B cell (primary cell): ENCODE measurements at regions of chr6 and their contacts with region 1.

Region 1: GRCh38 chr6:158808941-158809678 is 10.1 kb downstream of the EZR start:
- DNase-seq: peak; percentile 89
- ATAC-seq: peak; percentile 80
- H3K4me3 ChIP-seq: peak overlapping the region in 3 of 5 experiments; percentile 12 to 50 (median 15)
- H3K4me3 Mint-ChIP-seq: peak overlapping the region; percentile 85
- H3K27ac ChIP-seq: peak overlapping the region; percentile 94 to 96
- H3K27ac Mint-ChIP-seq: peak overlapping the region; percentile 96
- H3K4me1 ChIP-seq: peaks cover 97 to 98% of the 10 kb centered on the region in 2 donors
- H3K4me1 Mint-ChIP-seq: peaks cover 96% of the 10 kb centered on the region
- H3K27me3 ChIP-seq: no peaks in the 10 kb centered on the region
- H3K27me3 Mint-ChIP-seq: no peaks in the 10 kb centered on the region
- CTCF ChIP-seq: no peak

Region 2: GRCh38 chr6:158704181-158704822 is 104.8 kb before region 1 on chr6:
- CTCF ChIA-PET with region 1: interaction called, 13 read pairs
- POLR2A ChIA-PET with region 1: interaction called, 4 read pairs
- intact Hi-C with region 1: no loop called
- DNase-seq: peak; percentile 90
- ATAC-seq: peak; percentile 98
- H3K4me3 ChIP-seq: peak overlapping the region in 4 of 5 experiments; percentile 33 to 59 (median 52)
- H3K4me3 Mint-ChIP-seq: peak overlapping the region; percentile 92
- H3K27ac ChIP-seq: peak overlapping the region in 1 of 2 donors; percentile 36
- H3K27ac Mint-ChIP-seq: peak overlapping the region; percentile 89
- H3K4me1 ChIP-seq: peaks cover 19 to 30% of the 10 kb centered on the region in 2 donors
- H3K4me1 Mint-ChIP-seq: peaks cover 27% of the 10 kb centered on the region
- H3K27me3 ChIP-seq: no peaks in the 10 kb centered on the region
- H3K27me3 Mint-ChIP-seq: no peaks in the 10 kb centered on the region
- CTCF ChIP-seq: peak; percentile 99

Region 3: GRCh38 chr6:158769771-158770432 is 39.2 kb before region 1 on chr6:
- CTCF ChIA-PET with region 1: interaction called, 4 read pairs
- POLR2A ChIA-PET with region 1: no interaction called
- intact Hi-C with region 1: loop called (anchors 5 kb)
- DNase-seq: no peak
- ATAC-seq: no peak
- H3K4me3 ChIP-seq: no peak overlapping the region
- H3K4me3 Mint-ChIP-seq: no peak overlapping the region
- H3K27ac ChIP-seq: no peak overlapping the region
- H3K27ac Mint-ChIP-seq: peak overlapping the region; percentile 76
- H3K4me1 ChIP-seq: no peaks in the 10 kb centered on the region
- H3K4me1 Mint-ChIP-seq: no peaks in the 10 kb centered on the region
- H3K27me3 ChIP-seq: no peaks in the 10 kb centered on the region
- H3K27me3 Mint-ChIP-seq: no peaks in the 10 kb centered on the region
- CTCF ChIP-seq: no peak

Region 4: GRCh38 chr6:158793432-158793831 is 15.7 kb before region 1 on chr6:
- CTCF ChIA-PET with region 1: interaction called, 27 read pairs
- POLR2A ChIA-PET with region 1: interaction called, 5 read pairs
- intact Hi-C with region 1: loop called (anchors 2 kb)
- DNase-seq: peak; percentile 68
- ATAC-seq: peak; percentile 35
- H3K4me3 ChIP-seq: no peak overlapping the region
- H3K4me3 Mint-ChIP-seq: peak overlapping the region; percentile 54
- H3K27ac ChIP-seq: peak overlapping the region; percentile 40 to 54
- H3K27ac Mint-ChIP-seq: peak overlapping the region; percentile 61
- H3K4me1 ChIP-seq: peaks cover 91 to 92% of the 10 kb centered on the region in 2 donors
- H3K4me1 Mint-ChIP-seq: peaks cover 91% of the 10 kb centered on the region
- H3K27me3 ChIP-seq: no peaks in the 10 kb centered on the region
- H3K27me3 Mint-ChIP-seq: no peaks in the 10 kb centered on the region
- CTCF ChIP-seq: peak; percentile 68

Region 5: GRCh38 chr6:158819213-158819909 is 10.3 kb after region 1 on chr6 and contains the start of gene EZR:
- CTCF ChIA-PET with region 1: interaction called, 4 read pairs
- POLR2A ChIA-PET with region 1: interaction called, 17 read pairs
- intact Hi-C with region 1: loop called (anchors 1 kb)
- DNase-seq: peak; percentile 94
- ATAC-seq: peak; percentile 69
- H3K4me3 ChIP-seq: peak within 1 kb of the TSS; percentile 22 to 100 (median 69)
- H3K4me3 Mint-ChIP-seq: peak within 1 kb of the TSS; percentile 88
- H3K27ac ChIP-seq: peak within 1 kb of the TSS; percentile 96 to 99
- H3K27ac Mint-ChIP-seq: peak within 1 kb of the TSS; percentile 99
- H3K4me1 ChIP-seq: peaks cover 25 to 36% of the 10 kb centered on the region in 2 donors
- H3K4me1 Mint-ChIP-seq: peaks cover 36% of the 10 kb centered on the region
- H3K27me3 ChIP-seq: no peaks in the 10 kb centered on the region
- H3K27me3 Mint-ChIP-seq: no peaks in the 10 kb centered on the region
- CTCF ChIP-seq: no peak
- total RNA-seq, gene EZR: 943 and 945 TPM in 2 replicates

Region 6: GRCh38 chr6:158910484-158911348 is 101.6 kb after region 1 on chr6:
- CTCF ChIA-PET with region 1: interaction called, 5 read pairs
- POLR2A ChIA-PET with region 1: interaction called, 15 read pairs
- intact Hi-C with region 1: no loop called
- DNase-seq: peak; percentile 76
- ATAC-seq: peak; percentile 78
- H3K4me3 ChIP-seq: peak overlapping the region; percentile 7 to 66 (median 43)
- H3K4me3 Mint-ChIP-seq: peak overlapping the region; percentile 84
- H3K27ac ChIP-seq: peak overlapping the region; percentile 88 to 93
- H3K27ac Mint-ChIP-seq: peak overlapping the region; percentile 98
- H3K4me1 ChIP-seq: peaks cover 28 to 47% of the 10 kb centered on the region in 2 donors
- H3K4me1 Mint-ChIP-seq: peaks cover 54% of the 10 kb centered on the region
- H3K27me3 ChIP-seq: no peaks in the 10 kb centered on the region
- H3K27me3 Mint-ChIP-seq: no peaks in the 10 kb centered on the region
- CTCF ChIP-seq: no peak

Region 7: DNA sequence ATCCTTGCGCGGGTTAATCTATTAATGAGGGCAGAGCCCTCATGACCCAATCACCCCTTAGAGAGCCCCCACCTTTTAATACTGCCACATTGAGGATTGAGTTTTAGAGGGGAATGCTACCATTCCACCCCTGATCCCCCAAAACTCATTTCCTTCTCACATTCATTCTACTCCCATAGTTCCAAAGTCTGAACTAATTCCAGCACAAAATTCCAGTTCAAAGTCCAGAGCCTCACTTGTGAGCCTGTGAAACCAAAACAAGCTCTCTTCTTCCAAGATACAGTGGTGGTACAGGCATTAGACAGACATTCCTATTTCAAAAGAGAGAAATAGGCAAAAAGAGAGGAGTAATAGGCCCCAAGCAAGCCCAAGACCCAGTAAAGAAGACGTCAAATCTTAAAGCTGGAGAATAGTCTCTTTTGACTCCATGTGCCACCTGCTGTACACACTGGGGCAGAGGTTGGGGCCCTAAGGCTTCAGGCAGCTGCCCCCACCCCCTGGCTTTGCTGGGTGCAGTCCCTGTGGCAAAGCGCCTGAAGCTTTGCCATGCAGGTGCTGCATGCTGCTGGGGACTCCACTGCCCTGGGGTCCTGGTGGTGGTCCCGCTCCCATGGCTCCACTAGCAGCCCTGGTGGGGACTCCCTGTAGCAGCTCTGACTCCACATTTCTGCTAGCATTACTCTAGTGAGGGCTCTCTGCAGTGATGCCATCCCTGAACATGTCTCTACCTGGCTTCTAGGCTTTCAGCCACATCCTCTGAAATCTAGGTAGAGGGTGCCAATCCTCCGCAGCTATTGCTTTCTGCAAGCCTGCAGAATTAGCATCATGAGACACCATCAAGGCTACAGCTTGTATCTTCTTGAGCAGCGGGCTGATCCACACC is 149.6 kb after region 1 on chr6:
- CTCF ChIA-PET with region 1: interaction called, 18 read pairs
- POLR2A ChIA-PET with region 1: interaction called, 7 read pairs
- intact Hi-C with region 1: loop called (anchors 5 kb)
- DNase-seq: peak; percentile 71
- ATAC-seq: peak; percentile 82
- H3K4me3 ChIP-seq: no peak overlapping the region
- H3K4me3 Mint-ChIP-seq: no peak overlapping the region
- H3K27ac ChIP-seq: no peak overlapping the region
- H3K27ac Mint-ChIP-seq: peak overlapping the region; percentile 69
- H3K4me1 ChIP-seq: peaks cover 5 to 10% of the 10 kb centered on the region in 2 donors
- H3K4me1 Mint-ChIP-seq: peaks cover 23% of the 10 kb centered on the region
- H3K27me3 ChIP-seq: no peaks in the 10 kb centered on the region
- H3K27me3 Mint-ChIP-seq: no peaks in the 10 kb centered on the region
- CTCF ChIP-seq: peak; percentile 42